ENCODE measurements at regions of chr6 and their contacts with region 1.

Region 1: GRCh38 chr6:122399384-122400158 is at the start of gene HSF2:
- DNase-seq: peak; percentile 98
- H3K4me3 ChIP-seq: peak within 1 kb of the TSS; percentile 62 to 98 (median 93)
- H3K27ac ChIP-seq: peak within 1 kb of the TSS; percentile 89
- H3K4me1 ChIP-seq: peaks cover 14% of the 10 kb centered on the region
- H3K27me3 ChIP-seq: no peaks in the 10 kb centered on the region
- CTCF ChIP-seq: peak in 1 of 2 donors; percentile 32
- total RNA-seq, gene HSF2: 8.0 to 10.7 TPM

Region 2: GRCh38 chr6:122461885-122462284 is 62.3 kb after region 1 on chr6:
- CTCF ChIA-PET with region 1: no interaction called
- dilution Hi-C with region 1: no loop called
- in situ Hi-C with region 1: loop called in 1 of 2 experiments (anchors 10 kb)
- intact Hi-C with region 1: no loop called
- DNase-seq: no peak
- H3K4me3 ChIP-seq: no peak overlapping the region
- H3K27ac ChIP-seq: no peak overlapping the region
- H3K4me1 ChIP-seq: no peaks in the 10 kb centered on the region
- H3K27me3 ChIP-seq: no peaks in the 10 kb centered on the region
- CTCF ChIP-seq: no peak

Region 3: DNA sequence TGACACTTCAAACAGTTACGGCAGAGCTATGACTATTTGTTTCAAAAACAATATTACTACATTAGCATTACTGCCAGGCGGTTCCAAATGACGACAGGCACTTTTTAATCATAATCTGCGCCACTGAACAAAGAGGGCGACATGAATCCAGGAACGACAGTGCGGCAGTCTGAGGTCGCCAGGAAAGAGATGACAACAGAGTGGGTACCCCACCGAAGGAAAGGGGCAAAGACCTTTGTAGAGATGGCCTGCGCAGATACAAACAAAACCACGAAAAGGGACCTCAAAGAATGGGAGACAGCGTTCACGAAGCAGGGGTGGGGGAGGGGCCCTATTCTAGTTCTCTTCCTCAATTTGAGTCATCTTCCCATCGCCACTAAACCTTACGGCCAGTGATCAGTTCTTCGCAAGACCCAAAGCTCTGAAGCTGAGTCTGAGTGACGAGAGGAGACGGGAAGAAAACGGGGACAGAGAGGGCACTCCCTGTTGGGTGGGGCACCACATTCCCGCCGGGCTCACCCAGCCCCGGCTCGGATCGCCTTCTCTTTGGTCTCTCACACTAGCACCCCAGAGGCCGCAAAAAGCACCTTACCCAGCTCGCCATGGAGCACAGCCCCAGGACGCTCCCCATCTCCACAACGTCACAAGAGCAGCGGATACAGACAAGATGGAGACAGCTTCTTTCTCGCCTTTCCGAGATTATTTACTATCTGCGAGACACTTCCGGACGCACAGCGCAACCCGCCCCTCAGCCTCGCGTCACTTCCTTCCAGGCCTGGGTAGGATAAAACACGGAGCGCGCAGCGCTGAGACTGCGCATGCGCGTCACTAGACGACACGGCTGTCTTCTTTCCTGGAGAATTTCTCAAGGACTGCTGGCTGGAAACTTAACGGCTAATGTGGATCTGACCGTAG is 71.8 kb after region 1 on chr6 and contains the start of gene SERINC1:
- CTCF ChIA-PET with region 1: no interaction called
- dilution Hi-C with region 1: no loop called
- in situ Hi-C with region 1: loop called in 1 of 2 experiments (anchors 10 kb)
- intact Hi-C with region 1: loop called (anchors 1 kb)
- DNase-seq: peak; percentile 90
- H3K4me3 ChIP-seq: peak within 1 kb of the TSS; percentile 59 to 93 (median 68)
- H3K27ac ChIP-seq: peak within 1 kb of the TSS; percentile 95
- H3K4me1 ChIP-seq: peaks cover 5% of the 10 kb centered on the region
- H3K27me3 ChIP-seq: no peaks in the 10 kb centered on the region
- CTCF ChIP-seq: no peak
- total RNA-seq, gene SERINC1: 97.6 to 153 TPM

Region 4: DNA sequence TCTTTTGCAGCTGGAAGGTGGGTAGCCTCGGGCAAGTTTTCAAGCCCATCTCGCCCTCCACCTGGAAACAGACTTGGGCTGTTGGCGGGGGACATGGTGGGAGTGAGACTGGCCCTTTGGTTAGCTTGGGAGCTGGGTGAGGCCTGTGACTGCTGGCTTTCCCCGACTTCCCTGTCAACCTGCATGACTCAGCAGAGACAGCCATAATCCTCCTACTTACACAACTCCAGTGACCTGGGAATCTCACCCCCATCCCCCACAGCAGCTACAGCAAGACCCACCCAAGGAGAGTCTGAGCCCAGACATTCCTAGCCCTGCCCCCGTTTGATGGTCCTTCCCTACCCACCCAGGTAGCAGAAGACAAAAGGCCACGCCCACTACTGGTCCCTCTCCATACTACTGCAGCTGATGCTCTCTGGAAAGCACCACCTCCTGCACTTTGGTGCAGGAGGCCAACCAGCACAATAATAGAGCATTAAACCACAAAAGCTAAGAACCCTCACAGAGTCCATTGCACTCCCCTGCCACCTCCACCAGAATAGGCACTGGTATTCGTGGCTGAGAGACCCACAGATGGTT is 1048.8 kb after region 1 on chr6:
- CTCF ChIA-PET with region 1: interaction called, 10 read pairs
- dilution Hi-C with region 1: no loop called
- in situ Hi-C with region 1: no loop called
- intact Hi-C with region 1: no loop called
- DNase-seq: no peak
- H3K4me3 ChIP-seq: no peak overlapping the region
- H3K27ac ChIP-seq: no peak overlapping the region
- H3K4me1 ChIP-seq: no peaks in the 10 kb centered on the region
- H3K27me3 ChIP-seq: no peaks in the 10 kb centered on the region
- CTCF ChIP-seq: no peak

Measured in mammary epithelial cell (primary cell).